ENCODE measurements at regions of chr5 and their contacts with region 1.

Region 1: GRCh38 chr5:151080623-151081430 is at the start of gene TNIP1:
- DNase-seq: peak; percentile 88 to 93
- ATAC-seq: peak; percentile 79 to 90
- H3K4me3 ChIP-seq: peak within 1 kb of the TSS; percentile 67
- H3K27ac ChIP-seq: peak within 1 kb of the TSS; percentile 91 to 98
- H3K4me1 ChIP-seq: peaks cover 72% of the 10 kb centered on the region
- CTCF ChIP-seq: no peak
- EP300 ChIP-seq: no peak
- POLR2A ChIP-seq: peak; percentile 46; the same call in 1 of the 2 replicates
- RAD21 ChIP-seq: no peak
- polyA plus RNA-seq, gene TNIP1: 43.4 and 48.4 TPM in 2 replicates

Region 2: DNA sequence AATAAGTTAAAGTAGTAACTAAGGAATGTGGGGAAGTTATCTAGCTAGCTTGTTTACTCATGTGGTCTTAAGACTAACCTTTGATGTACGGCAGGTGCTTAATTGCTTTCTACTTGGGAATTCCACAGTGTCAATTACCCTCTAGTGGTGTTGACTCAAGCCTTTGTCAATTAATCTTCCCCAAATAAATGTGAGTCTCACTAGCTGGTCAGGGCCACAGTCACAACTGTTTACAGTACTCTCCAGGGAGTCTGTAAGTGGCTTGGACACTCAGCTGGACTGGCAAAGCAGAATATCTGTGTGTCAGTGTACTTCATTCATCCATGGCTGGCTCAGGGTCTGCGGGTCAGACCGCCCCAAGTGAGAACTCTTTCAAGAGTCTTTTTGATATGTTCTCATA is 271.5 kb before region 1 on chr5:
- CTCF ChIA-PET with region 1: no interaction called
- POLR2A ChIA-PET with region 1: no interaction called
- DNase-seq: no peak
- ATAC-seq: no peak
- H3K4me3 ChIP-seq: no peak overlapping the region
- H3K27ac ChIP-seq: no peak overlapping the region
- H3K4me1 ChIP-seq: no peaks in the 10 kb centered on the region
- CTCF ChIP-seq: no peak
- EP300 ChIP-seq: no peak
- POLR2A ChIP-seq: no peak
- RAD21 ChIP-seq: no peak

Region 3: DNA sequence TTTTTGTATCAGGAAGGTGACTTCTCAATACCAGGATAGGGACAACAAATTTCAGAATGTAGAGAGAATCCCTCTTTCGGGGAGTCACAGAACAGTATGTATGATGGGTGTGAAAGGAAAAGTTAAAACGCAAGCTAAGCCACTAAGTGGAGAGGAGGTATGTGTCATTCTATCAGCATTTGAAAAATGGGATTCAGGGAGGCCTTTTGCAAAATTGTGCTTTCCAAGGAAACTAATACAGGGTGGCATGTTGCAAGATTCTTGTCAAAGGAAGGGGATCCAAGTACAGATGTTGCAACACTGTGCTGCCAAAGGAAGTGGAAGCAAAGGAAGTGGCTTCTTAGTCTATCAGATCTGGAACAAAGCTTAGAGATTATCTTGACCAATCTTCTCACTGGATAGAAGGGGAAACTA is 12.7 kb after region 1 on chr5:
- CTCF ChIA-PET with region 1: interaction called, 6 read pairs
- POLR2A ChIA-PET with region 1: interaction called, 23 read pairs
- DNase-seq: peak in 1 of 2 experiments; percentile 58
- ATAC-seq: peak; percentile 57 to 64
- H3K4me3 ChIP-seq: no peak overlapping the region
- H3K27ac ChIP-seq: peak overlapping the region; percentile 84 to 90
- H3K4me1 ChIP-seq: peaks cover 37% of the 10 kb centered on the region
- CTCF ChIP-seq: no peak
- EP300 ChIP-seq: peak; percentile 18 to 64; a peak in 2 of 5 replicates
- POLR2A ChIP-seq: no peak
- RAD21 ChIP-seq: no peak

Measured in A549 (cell line).